Dorsolateral prefrontal cortex (tissue), 120 donors: ENCODE measurements at regions of chr11 and their contacts with region 1.

Region 1: DNA sequence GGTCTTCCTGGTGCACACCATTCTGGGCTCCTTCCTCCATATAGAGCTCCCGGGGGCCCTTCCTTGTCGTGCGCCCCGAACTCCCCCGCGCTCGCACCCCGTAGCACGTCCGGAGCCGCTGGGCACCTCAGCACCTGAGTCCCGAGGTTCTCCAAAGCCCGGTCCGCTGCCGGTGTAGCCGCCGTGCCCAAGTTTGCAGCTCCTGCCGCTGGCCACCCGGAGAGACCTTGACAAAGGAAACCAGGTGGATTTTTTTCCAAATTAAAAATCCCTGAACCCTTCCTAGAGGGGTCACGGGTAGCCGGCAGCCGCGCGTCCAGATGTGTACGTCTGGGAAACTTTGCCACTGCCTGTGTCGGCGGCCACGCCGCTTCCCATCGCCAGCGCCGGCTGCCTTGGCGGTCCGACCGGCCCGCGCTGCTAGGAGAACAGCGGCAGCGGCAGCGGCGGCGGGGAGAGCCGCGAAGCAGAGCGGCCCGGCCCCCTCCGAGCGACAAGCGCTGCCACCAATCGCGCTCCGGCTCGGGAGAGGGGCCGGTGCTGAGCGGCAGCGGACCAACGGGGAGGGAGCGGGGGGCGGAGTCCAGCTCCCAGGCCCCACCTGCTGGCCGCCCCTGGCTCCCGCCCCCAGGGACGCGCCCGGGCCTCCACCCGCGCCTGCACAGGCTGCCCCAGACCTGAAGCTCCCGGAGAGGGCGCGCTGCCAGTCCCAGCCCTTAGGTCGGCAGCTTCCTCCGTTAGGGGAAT is at the start of gene GALNT18:
- DNase-seq: peak; percentile 80 to 96 (median 90)
- H3K4me3 ChIP-seq: peak within 1 kb of the TSS; percentile 53 to 96 (median 82)
- H3K27ac ChIP-seq: peak within 1 kb of the TSS in 50 of 59 donors; percentile 1 to 88 (median 68)
- H3K27me3 ChIP-seq: no peaks in the 10 kb centered on the region
- CTCF ChIP-seq: peak in 55 of 56 donors; percentile 30 to 84 (median 67)
- total RNA-seq, gene GALNT18: 15.6 to 50.3 (median 32.5) TPM

Region 2: GRCh38 chr11:11028017-11028692 is 593.6 kb before region 1 on chr11:
- intact Hi-C with region 1: loop called in 1 of 2 experiments (anchors 10 kb)
- DNase-seq: peak in 9 of 10 donors; percentile 24 to 71 (median 63)
- H3K4me3 ChIP-seq: no peak overlapping the region
- H3K27ac ChIP-seq: no peak overlapping the region
- H3K27me3 ChIP-seq: no peaks in the 10 kb centered on the region
- CTCF ChIP-seq: peak in 55 of 56 donors; percentile 33 to 75 (median 63)

Region 3: DNA sequence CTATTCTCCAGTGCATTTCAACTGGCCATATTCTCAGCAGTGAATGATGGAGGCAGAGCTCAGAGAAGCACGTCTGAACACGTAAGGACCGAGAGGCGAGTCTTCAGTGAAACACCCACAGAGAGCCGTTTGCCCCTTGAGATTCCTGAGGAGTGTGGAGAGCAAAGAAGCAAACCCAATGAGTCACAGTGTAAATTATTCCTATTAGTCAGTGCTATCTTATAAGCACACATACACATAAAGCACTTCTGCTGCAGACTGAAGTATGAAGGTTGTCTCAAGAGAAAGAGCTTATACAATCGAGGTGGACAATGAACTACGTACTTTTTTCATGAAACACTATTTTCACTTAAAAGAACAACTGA is 37.3 kb before region 1 on chr11:
- intact Hi-C with region 1: loop called (anchors 1 to 5 kb)
- DNase-seq: no peak
- H3K4me3 ChIP-seq: no peak overlapping the region
- H3K27ac ChIP-seq: no peak overlapping the region
- H3K27me3 ChIP-seq: no peaks in the 10 kb centered on the region
- CTCF ChIP-seq: no peak

Region 4: GRCh38 chr11:11701070-11701469 is 79.3 kb after region 1 on chr11:
- intact Hi-C with region 1: no loop called
- DNase-seq: peak in 1 of 10 donors; percentile 23
- H3K4me3 ChIP-seq: no peak overlapping the region
- H3K27ac ChIP-seq: no peak overlapping the region
- H3K27me3 ChIP-seq: no peaks in the 10 kb centered on the region
- CTCF ChIP-seq: no peak